OCI-LY7 (cell line): ENCODE measurements at regions of chr17 and their contacts with region 1.

Region 1: DNA sequence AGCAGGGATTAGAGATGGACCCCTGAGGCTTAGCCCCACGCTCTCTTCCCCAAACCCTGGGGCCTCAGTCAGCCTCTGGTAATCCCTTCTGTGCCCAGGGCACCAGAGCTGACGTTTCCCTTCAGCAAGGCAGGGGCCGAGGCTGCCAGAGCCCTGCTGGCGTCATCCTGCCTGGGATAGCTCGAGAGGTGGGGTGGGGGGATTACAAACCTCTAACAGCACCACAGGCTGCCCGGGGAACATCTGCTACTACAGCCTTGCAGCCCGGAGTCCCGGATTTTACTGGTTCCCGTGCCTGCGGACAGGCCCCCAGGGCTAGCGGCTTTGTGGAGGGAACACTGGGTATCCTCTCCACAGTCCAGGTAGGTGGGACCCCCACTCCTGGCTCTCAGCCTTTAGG is at the start of gene AANAT:
- DNase-seq: no peak
- H3K4me3 ChIP-seq: no peak within 1 kb of the TSS
- H3K27ac ChIP-seq: peak within 1 kb of the TSS; percentile 38
- H3K4me1 ChIP-seq: peaks cover 35% of the 10 kb centered on the region
- CTCF ChIP-seq: no peak
- total RNA-seq, gene AANAT: not detected in 2 replicates

Region 2: DNA sequence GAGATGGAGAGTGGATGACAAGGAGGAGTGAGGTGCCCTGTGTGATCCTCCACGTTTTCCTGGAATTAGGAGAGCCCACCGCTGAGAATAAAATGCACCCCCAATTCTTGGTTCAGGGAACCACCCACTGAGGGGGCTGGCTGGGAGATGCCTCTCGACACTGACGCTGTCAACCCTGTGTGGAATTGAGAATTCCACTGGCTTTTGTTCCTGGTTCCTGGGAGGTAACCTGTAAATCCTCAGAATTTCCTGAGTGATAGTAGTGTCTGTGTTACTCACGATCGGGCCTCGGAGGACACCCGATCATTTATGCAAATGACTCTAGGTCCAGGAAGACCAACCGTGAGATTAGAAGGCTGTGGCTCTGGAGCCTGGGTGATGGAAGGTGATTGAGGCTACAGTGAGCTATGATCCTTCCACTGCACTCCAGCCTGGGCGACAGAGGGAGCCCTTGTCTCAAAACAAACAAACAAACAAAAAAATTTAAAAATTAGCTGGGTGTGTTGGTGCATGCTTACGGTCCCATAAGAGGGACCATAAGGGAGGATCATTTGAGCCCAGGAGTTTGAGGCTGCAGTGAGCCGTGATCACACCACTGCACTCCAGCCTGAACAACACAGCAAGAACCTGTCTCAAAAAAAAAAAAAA is 102.0 kb before region 1 on chr17:
- CTCF ChIA-PET with region 1: no interaction called
- POLR2A ChIA-PET with region 1: no interaction called
- intact Hi-C with region 1: no loop called
- DNase-seq: peak; percentile 38
- H3K4me3 ChIP-seq: no peak overlapping the region
- H3K27ac ChIP-seq: no peak overlapping the region
- H3K4me1 ChIP-seq: peaks cover 10% of the 10 kb centered on the region
- CTCF ChIP-seq: peak; percentile 75

Region 3: GRCh38 chr17:76501018-76501826 is 33.9 kb after region 1 on chr17 and contains the start of gene RHBDF2:
- CTCF ChIA-PET with region 1: interaction called, 12 read pairs
- POLR2A ChIA-PET with region 1: interaction called, 9 read pairs
- intact Hi-C with region 1: loop called (anchors 1 kb)
- DNase-seq: peak; percentile 94
- H3K4me3 ChIP-seq: peak within 1 kb of the TSS; percentile 96
- H3K27ac ChIP-seq: peak within 1 kb of the TSS; percentile 83
- H3K4me1 ChIP-seq: peaks cover 77% of the 10 kb centered on the region
- CTCF ChIP-seq: no peak
- total RNA-seq, gene RHBDF2: 122 and 144 TPM in 2 replicates